ENCODE measurements at regions of chr4 and their contacts with region 1.

Region 1: GRCh38 chr4:53015681-53016080 is 153.6 kb downstream of the RASL11B start:
- DNase-seq: peak; percentile 49
- ATAC-seq: no peak
- H3K4me3 Mint-ChIP-seq: no peak overlapping the region
- H3K27ac Mint-ChIP-seq: no peak overlapping the region
- H3K4me1 Mint-ChIP-seq: peaks cover 24% of the 10 kb centered on the region
- H3K27me3 Mint-ChIP-seq: no peaks in the 10 kb centered on the region
- CTCF ChIP-seq: peak; percentile 81

Region 2: DNA sequence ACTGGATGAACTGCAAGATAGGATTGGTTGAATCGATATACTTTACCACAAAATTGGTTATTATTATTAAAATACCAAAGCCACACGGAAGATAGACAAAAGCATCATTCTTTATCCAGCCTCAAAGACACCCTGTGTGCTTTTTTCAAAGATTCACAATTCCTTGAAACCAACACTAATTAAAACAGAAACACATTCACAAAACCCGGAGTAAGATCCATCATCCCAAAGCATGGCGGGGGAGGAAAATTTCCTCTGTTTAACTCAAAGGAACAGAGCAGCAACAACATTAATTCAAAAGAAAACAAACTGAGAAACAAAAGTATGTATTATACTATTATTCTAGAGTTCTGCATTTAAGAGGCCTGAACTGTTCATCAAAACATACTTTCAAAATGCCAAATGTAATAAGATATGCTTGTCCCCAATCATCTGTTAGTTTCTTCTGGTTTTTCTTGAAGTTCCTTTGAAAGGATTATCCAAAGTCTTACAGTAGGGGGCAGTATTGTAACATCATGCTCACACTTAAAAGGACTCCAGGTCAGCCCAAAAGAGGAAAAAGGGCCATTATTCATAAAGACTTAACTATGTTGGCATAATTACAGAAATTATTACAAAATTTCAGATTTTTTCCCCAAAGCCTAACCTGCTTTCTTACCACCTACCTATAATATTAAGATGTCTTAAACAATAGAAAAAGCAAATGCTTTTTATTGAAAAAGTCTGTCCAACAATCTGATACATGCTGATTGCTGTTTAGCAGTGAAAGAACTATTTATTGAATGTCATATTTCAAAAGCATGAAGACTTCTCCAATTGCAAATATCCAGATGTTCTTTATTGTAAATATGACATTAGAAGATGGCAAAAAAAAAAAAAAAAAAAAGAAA is 181.4 kb after region 1 on chr4:
- CTCF ChIA-PET with region 1: interaction called, 9 read pairs
- POLR2A ChIA-PET with region 1: no interaction called
- intact Hi-C with region 1: loop called (anchors 10 kb)
- DNase-seq: no peak
- ATAC-seq: no peak
- H3K4me3 Mint-ChIP-seq: no peak overlapping the region
- H3K27ac Mint-ChIP-seq: no peak overlapping the region
- H3K4me1 Mint-ChIP-seq: no peaks in the 10 kb centered on the region
- H3K27me3 Mint-ChIP-seq: no peaks in the 10 kb centered on the region
- CTCF ChIP-seq: peak; percentile 83

Region 3: DNA sequence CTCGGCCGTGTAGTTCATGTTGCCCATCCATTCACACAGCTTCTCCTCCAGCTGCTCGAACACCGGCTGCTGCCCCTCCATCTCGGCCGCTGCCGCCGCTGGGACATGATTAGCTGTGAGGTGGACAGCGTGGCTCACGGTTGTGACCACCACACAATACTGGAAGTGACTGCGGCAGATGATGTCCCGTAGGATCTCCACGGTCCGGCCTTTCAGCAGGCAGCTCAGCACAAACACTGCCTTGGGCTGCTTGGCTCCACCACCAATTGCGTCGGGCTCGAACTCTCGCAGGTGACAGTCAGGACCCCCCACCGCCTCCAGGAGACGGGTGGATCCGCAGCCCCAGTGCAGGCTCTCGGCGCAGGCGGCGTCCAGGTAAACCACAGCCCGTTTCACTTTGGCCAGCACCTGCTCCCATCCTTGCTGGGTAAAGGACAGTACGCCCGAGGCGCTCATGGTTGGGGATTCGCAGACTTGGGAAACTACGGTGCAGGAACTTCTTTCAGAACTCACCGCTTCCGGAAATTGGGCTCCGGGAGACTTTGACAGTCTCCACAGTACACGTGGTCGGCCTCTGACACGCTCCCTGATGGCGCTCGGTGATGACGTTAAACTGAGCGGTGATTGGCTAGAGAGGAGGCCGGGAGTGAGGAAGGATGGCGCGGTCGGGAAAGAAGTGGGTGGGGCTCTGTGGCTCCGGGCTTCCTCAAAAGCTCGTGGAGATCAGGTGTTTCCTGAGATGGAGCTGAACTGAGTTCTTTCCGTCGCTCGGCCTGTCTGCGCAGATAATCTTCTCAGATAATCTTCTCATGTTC is 350.0 kb after region 1 on chr4 and contains the start of gene SCFD2:
- CTCF ChIA-PET with region 1: interaction called, 4 read pairs
- POLR2A ChIA-PET with region 1: no interaction called
- intact Hi-C with region 1: loop called (anchors 10 kb)
- DNase-seq: peak; percentile 98
- ATAC-seq: peak; percentile 97
- H3K4me3 Mint-ChIP-seq: peak within 1 kb of the TSS; percentile 96
- H3K27ac Mint-ChIP-seq: peak within 1 kb of the TSS; percentile 92
- H3K4me1 Mint-ChIP-seq: peaks cover 34% of the 10 kb centered on the region
- H3K27me3 Mint-ChIP-seq: peaks cover 7% of the 10 kb centered on the region
- CTCF ChIP-seq: no peak
- total RNA-seq, gene SCFD2: 21.4 to 22.1 TPM